CD8-positive, alpha-beta memory T cell (primary cell): ENCODE measurements at regions of chr18 and their contacts with region 1.

Region 1: DNA sequence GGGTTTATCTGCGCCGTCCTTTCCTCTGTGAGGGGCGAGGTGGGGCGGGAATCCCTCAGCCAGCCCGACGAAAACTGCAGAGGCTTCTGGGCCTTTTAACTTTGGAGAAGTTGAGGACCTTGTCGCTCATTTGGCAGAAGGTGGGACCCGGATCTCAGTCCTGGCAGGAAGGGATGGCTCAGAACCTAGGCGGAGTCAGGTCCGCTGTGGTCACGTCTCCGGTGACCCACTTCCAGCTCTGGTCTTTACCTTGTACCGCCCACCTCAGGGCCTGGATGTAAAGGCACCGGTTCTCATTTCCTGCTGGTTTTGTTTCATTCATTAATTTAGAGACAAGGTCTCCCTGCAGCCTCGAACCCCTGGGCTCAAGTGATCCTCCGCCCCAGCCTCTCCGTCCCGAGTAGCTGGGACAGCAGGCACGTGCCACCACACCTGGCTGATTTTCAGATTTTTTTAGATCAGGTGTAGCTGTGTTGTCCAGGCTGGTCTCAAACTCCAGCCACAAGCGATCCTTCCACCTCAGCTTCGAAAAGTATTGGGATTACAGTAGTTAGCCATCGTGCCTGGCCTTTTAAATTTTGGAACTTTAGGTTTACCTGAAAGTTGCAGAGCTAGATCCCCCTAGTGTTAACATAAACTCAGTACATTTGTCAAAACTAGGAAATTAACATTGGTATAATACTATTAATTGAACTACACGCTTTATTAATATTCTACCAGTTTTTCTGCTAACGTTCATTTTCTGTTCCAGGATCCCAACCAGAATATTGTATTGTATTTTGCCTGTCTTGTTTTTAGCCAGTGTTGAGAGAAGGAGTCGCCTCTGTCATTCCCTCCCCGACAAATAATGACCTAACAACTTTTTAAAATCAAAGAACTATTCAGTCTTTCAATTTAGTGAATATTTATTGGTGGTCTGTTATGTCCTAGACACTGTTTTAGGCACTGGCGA is 852 bp downstream of the POLI start:
- DNase-seq: peak in 4 of 5 donors; percentile 31 to 70 (median 44)
- H3K4me3 ChIP-seq: peak overlapping the region; percentile 97
- H3K4me3 Mint-ChIP-seq: peak overlapping the region; percentile 89 to 98 (median 93)
- H3K27ac ChIP-seq: peak overlapping the region; percentile 89
- H3K27ac Mint-ChIP-seq: peak overlapping the region; percentile 96 to 99 (median 98)
- H3K4me1 ChIP-seq: peaks cover 18% of the 10 kb centered on the region
- H3K4me1 Mint-ChIP-seq: peaks cover 12 to 40% (median 33%) of the 10 kb centered on the region in 3 donors
- H3K27me3 ChIP-seq: no peaks in the 10 kb centered on the region
- H3K27me3 Mint-ChIP-seq: peaks cover 0 to 3% of the 10 kb centered on the region in 2 donors

Region 2: GRCh38 chr18:54217624-54218023 is 52.5 kb before region 1 on chr18:
- CTCF ChIA-PET with region 1: interaction called, 30 read pairs
- POLR2A ChIA-PET with region 1: interaction called, 17 read pairs
- DNase-seq: no peak
- H3K4me3 ChIP-seq: no peak overlapping the region
- H3K4me3 Mint-ChIP-seq: peak overlapping the region in 4 of 7 donors; percentile 6 to 43 (median 32)
- H3K27ac ChIP-seq: no peak overlapping the region
- H3K27ac Mint-ChIP-seq: peak overlapping the region in 4 of 8 donors; percentile 22 to 54 (median 32)
- H3K4me1 ChIP-seq: peaks cover 23% of the 10 kb centered on the region
- H3K4me1 Mint-ChIP-seq: peaks cover 56 to 82% (median 72%) of the 10 kb centered on the region in 3 donors
- H3K27me3 ChIP-seq: no peaks in the 10 kb centered on the region
- H3K27me3 Mint-ChIP-seq: no peaks in the 10 kb centered on the region

Region 3: GRCh38 chr18:54224379-54225014 is 45.7 kb before region 1 on chr18 and contains the start of gene MBD2:
- CTCF ChIA-PET with region 1: interaction called, 30 read pairs
- POLR2A ChIA-PET with region 1: interaction called, 17 read pairs
- DNase-seq: peak; percentile 90 to 96 (median 93)
- H3K4me3 ChIP-seq: peak within 1 kb of the TSS; percentile 38
- H3K4me3 Mint-ChIP-seq: peak within 1 kb of the TSS; percentile 93 to 98 (median 95)
- H3K27ac ChIP-seq: peak within 1 kb of the TSS; percentile 41
- H3K27ac Mint-ChIP-seq: peak within 1 kb of the TSS; percentile 89 to 99 (median 98)
- H3K4me1 ChIP-seq: peaks cover 23% of the 10 kb centered on the region
- H3K4me1 Mint-ChIP-seq: peaks cover 38 to 46% (median 43%) of the 10 kb centered on the region in 3 donors
- H3K27me3 ChIP-seq: no peaks in the 10 kb centered on the region
- H3K27me3 Mint-ChIP-seq: peaks cover 0 to 4% of the 10 kb centered on the region in 2 donors
- total RNA-seq, gene MBD2: 195 to 201 TPM

Region 4: GRCh38 chr18:54357660-54358494 is 87.7 kb after region 1 on chr18 and contains the starts of genes C18orf54 and STARD6:
- CTCF ChIA-PET with region 1: interaction called, 13 read pairs
- POLR2A ChIA-PET with region 1: interaction called, 4 read pairs
- DNase-seq: peak; percentile 84 to 93 (median 90)
- H3K4me3 ChIP-seq: peak within 1 kb of the TSS; percentile 95
- H3K4me3 Mint-ChIP-seq: peak within 1 kb of the TSS; percentile 95 to 100 (median 97)
- H3K27ac ChIP-seq: peak within 1 kb of the TSS; percentile 81
- H3K27ac Mint-ChIP-seq: peak within 1 kb of the TSS; percentile 80 to 99 (median 96)
- H3K4me1 ChIP-seq: peaks cover 12% of the 10 kb centered on the region
- H3K4me1 Mint-ChIP-seq: peaks cover 16 to 23% (median 22%) of the 10 kb centered on the region in 3 donors
- H3K27me3 ChIP-seq: no peaks in the 10 kb centered on the region
- H3K27me3 Mint-ChIP-seq: peaks cover 0 to 3% of the 10 kb centered on the region in 2 donors
- total RNA-seq, gene C18orf54: 10.1 to 10.6 TPM
- total RNA-seq, gene STARD6: 0.46 TPM in 1 of 2 experiments, not detected in the other